BJ (cell line): ENCODE measurements at regions of chr7 and their contacts with region 1.

Region 1: DNA sequence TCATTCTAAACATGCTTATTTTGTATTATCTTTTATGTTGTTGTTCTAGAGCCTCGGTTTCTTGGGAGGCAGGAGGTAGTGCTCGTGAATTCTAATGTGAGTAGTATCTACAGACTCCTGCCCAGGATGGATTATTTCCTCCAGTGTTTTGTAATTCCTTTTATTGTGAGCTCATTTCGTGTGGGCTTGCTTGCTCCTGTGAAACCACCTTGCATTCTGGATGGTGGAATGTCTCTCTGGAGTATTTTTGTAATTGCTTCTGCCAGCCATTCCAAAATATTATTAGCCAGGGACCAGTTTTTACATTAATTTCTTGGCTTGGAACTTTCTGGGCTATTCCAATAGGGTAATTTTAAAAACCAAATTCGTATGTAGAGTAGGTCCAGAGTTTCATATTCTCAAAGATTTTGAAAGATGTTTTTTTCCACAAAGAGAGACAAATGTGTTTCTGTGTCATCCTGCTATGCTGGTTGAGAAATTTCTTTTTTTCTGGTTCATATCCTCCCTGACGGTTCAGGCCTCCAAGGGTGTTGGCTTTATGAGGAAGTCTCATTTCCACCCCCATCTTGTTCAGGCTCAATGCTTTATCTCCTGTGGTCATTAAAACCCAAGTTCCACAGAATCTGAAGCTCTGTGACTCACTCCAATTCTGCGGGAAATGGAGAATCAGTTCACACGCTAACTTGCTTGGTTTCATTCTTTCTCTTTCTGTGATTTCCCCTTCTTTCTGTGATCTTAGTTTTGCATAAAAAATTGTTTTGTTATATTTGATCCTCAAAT is 41.7 kb upstream of the CALD1 start:
- DNase-seq: peak; percentile 90
- H3K4me3 ChIP-seq: no peak overlapping the region
- H3K27me3 ChIP-seq: no peaks in the 10 kb centered on the region
- CTCF ChIP-seq: no peak

Region 2: DNA sequence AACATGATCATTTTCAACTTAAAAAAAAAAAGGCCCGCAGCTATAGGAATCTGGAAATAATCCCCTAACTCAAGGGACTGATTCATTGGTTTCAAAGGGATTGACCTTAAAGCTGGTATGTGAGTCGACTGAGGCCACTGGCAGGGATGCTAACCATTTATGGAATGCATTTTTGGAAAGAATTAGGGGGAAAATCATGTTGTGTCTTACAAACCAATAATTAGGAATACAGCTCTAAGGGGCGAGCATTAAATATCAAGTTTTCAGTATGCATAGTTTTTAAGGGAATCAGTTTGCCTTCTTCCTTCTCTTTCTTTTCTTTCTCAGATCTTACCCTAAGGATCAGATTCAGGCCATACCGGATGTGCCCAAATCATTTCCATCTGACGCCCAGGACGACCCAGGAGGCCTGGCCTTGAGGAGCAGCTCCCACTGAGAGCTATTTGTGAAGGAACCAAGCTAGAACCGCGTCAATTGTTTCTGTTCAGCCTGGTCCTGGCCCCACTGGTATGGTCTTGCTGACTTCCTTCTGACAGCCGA is 42.4 kb before region 1 on chr7:
- CTCF ChIA-PET with region 1: interaction called, 9 read pairs
- POLR2A ChIA-PET with region 1: interaction called, 10 read pairs
- DNase-seq: peak; percentile 74
- H3K4me3 ChIP-seq: no peak overlapping the region
- H3K27me3 ChIP-seq: no peaks in the 10 kb centered on the region
- CTCF ChIP-seq: no peak

Region 3: GRCh38 chr7:134750083-134751062 is 12.6 kb after region 1 on chr7:
- CTCF ChIA-PET with region 1: interaction called, 11 read pairs
- POLR2A ChIA-PET with region 1: no interaction called
- DNase-seq: no peak
- H3K4me3 ChIP-seq: no peak overlapping the region
- H3K27me3 ChIP-seq: no peaks in the 10 kb centered on the region
- CTCF ChIP-seq: peak; percentile 80

Region 4: GRCh38 chr7:134755401-134756022 is 17.8 kb after region 1 on chr7:
- CTCF ChIA-PET with region 1: interaction called, 11 read pairs
- POLR2A ChIA-PET with region 1: interaction called, 3 read pairs
- DNase-seq: no peak
- H3K4me3 ChIP-seq: no peak overlapping the region
- H3K27me3 ChIP-seq: no peaks in the 10 kb centered on the region
- CTCF ChIP-seq: peak; percentile 79